WTC11 (cell line): ENCODE measurements at regions of chr5 and their contacts with region 1.

Region 1: GRCh38 chr5:96997265-96997859 is 61.5 kb downstream of the LNPEP start:
- DNase-seq: no peak
- ATAC-seq: peak; percentile 47; the same call in 1 of the 2 replicates
- H3K4me3 Mint-ChIP-seq: no peak overlapping the region
- H3K27ac Mint-ChIP-seq: no peak overlapping the region
- H3K4me1 Mint-ChIP-seq: peaks cover 4% of the 10 kb centered on the region; the same call in 1 of the 2 replicates
- H3K27me3 Mint-ChIP-seq: no peaks in the 10 kb centered on the region
- CTCF ChIP-seq: no peak; the same call in none of the 2 replicates

Region 2: DNA sequence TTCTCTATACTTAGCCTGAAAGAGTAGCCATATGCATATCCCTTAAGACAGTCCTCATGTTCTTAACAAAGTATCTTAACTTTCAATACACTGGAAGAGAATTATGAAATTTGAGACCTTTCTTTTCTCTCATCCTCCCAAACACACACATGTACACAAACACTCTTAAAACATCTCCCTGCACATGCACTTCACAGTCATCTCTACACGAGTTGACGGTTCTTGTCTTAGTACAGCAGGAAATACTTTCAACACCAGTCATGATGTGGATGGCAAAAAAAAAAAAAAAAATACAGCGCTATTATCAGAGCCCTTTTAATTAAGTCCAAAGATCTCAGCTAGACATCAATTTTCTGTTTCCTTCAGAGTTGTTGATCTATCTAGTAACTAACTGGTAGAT is 520.7 kb before region 1 on chr5:
- CTCF ChIA-PET with region 1: no interaction called
- POLR2A ChIA-PET with region 1: no interaction called
- DNase-seq: no peak
- ATAC-seq: no peak
- H3K4me3 Mint-ChIP-seq: no peak overlapping the region
- H3K27ac Mint-ChIP-seq: no peak overlapping the region
- H3K4me1 Mint-ChIP-seq: peaks cover 9% of the 10 kb centered on the region
- H3K27me3 Mint-ChIP-seq: no peaks in the 10 kb centered on the region
- CTCF ChIP-seq: no peak

Region 3: GRCh38 chr5:96924016-96924443 is 73.3 kb before region 1 on chr5:
- CTCF ChIA-PET with region 1: no interaction called
- POLR2A ChIA-PET with region 1: no interaction called
- DNase-seq: no peak
- ATAC-seq: no peak
- H3K4me3 Mint-ChIP-seq: no peak overlapping the region
- H3K27ac Mint-ChIP-seq: peak overlapping the region; percentile 6; the same call in 1 of the 2 replicates
- H3K4me1 Mint-ChIP-seq: peaks cover 7% of the 10 kb centered on the region
- H3K27me3 Mint-ChIP-seq: no peaks in the 10 kb centered on the region
- CTCF ChIP-seq: no peak

Region 4: GRCh38 chr5:97044052-97044451 is 46.7 kb after region 1 on chr5:
- CTCF ChIA-PET with region 1: interaction called, 14 read pairs
- POLR2A ChIA-PET with region 1: no interaction called
- DNase-seq: peak; percentile 76
- ATAC-seq: peak; percentile 97
- H3K4me3 Mint-ChIP-seq: no peak overlapping the region
- H3K27ac Mint-ChIP-seq: no peak overlapping the region; the same call in 1 of the 2 replicates
- H3K4me1 Mint-ChIP-seq: peaks cover 33% of the 10 kb centered on the region
- H3K27me3 Mint-ChIP-seq: no peaks in the 10 kb centered on the region
- CTCF ChIP-seq: peak; percentile 30; the same call in 1 of the 2 replicates

Region 5: GRCh38 chr5:97094579-97095317 is 97.4 kb after region 1 on chr5:
- CTCF ChIA-PET with region 1: no interaction called
- POLR2A ChIA-PET with region 1: no interaction called
- DNase-seq: no peak
- ATAC-seq: no peak
- H3K4me3 Mint-ChIP-seq: no peak overlapping the region
- H3K27ac Mint-ChIP-seq: no peak overlapping the region
- H3K4me1 Mint-ChIP-seq: peaks cover 32% of the 10 kb centered on the region
- H3K27me3 Mint-ChIP-seq: no peaks in the 10 kb centered on the region
- CTCF ChIP-seq: no peak

Region 6: DNA sequence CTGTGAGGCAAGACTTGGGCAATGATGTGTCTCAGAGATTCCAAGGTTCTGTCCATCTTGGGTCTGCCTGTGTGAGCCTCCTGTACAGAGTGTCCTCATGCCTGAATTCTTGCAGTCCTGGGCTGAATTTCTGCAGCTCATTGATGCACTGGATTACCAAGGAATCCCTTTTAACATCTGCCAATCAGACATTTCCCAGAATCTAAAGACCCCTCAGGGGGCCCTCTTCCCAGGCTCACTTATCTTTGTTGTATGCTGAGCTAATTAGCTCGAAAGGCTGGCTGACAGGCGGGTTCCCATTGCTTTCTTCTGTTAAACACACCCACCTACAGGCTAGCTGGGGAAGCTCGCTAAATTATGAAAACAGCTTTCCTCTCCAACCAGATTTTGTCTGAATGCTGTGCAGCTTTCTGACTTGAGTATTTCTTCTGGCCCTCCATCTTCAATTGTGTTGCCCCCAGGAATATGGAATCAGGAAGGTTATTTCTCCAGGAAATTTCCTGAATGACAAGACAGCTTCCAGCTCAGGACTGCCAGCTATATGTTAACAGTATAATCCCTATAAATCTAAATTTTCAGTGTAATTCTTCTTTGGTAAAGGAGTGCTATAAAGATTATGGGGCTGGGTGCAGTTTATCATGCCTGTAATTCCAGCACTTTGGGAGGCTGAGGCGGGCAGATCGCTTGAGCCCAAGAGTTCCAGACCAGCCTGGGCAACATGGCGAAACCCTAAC is 145.3 kb after region 1 on chr5 and contains the start of gene LIX1:
- CTCF ChIA-PET with region 1: interaction called, 70 read pairs
- POLR2A ChIA-PET with region 1: no interaction called
- DNase-seq: peak; percentile 59
- ATAC-seq: peak; percentile 92
- H3K4me3 Mint-ChIP-seq: no peak within 1 kb of the TSS
- H3K27ac Mint-ChIP-seq: peak within 1 kb of the TSS; percentile 43; the same call in 1 of the 2 replicates
- H3K4me1 Mint-ChIP-seq: peaks cover 28% of the 10 kb centered on the region
- H3K27me3 Mint-ChIP-seq: no peaks in the 10 kb centered on the region
- CTCF ChIP-seq: no peak
- total RNA-seq, gene LIX1: not detected in 3 replicates

Region 7: DNA sequence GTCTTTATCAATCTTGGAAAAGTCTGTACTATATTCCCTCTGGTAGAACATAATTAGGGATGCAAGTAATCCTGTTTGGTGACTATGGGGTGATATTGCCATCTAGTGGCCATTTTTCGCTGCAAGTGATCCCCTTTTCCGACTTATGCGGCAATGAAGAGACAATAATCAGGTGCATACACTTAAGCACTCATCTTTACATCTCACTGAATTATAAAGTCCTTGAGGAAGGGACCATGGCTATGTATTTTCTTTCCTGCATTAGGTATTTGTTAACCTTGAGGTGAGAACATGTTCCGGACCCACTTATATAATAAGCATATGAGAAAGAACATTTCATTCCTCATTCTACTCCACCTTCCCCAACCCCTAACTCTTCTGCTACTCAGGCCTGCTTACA is 164.7 kb after region 1 on chr5:
- CTCF ChIA-PET with region 1: interaction called, 11 read pairs
- POLR2A ChIA-PET with region 1: no interaction called
- DNase-seq: peak; percentile 66
- ATAC-seq: peak; percentile 70
- H3K4me3 Mint-ChIP-seq: no peak overlapping the region
- H3K27ac Mint-ChIP-seq: no peak overlapping the region
- H3K4me1 Mint-ChIP-seq: no peaks in the 10 kb centered on the region
- H3K27me3 Mint-ChIP-seq: no peaks in the 10 kb centered on the region
- CTCF ChIP-seq: peak; percentile 63

Region 8: GRCh38 chr5:97172227-97172626 is 174.9 kb after region 1 on chr5:
- CTCF ChIA-PET with region 1: no interaction called
- POLR2A ChIA-PET with region 1: no interaction called
- DNase-seq: no peak
- ATAC-seq: no peak
- H3K4me3 Mint-ChIP-seq: no peak overlapping the region
- H3K27ac Mint-ChIP-seq: no peak overlapping the region
- H3K4me1 Mint-ChIP-seq: no peaks in the 10 kb centered on the region
- H3K27me3 Mint-ChIP-seq: no peaks in the 10 kb centered on the region
- CTCF ChIP-seq: no peak